ENCODE measurements at regions of chr17 and their contacts with region 1.

Region 1: DNA sequence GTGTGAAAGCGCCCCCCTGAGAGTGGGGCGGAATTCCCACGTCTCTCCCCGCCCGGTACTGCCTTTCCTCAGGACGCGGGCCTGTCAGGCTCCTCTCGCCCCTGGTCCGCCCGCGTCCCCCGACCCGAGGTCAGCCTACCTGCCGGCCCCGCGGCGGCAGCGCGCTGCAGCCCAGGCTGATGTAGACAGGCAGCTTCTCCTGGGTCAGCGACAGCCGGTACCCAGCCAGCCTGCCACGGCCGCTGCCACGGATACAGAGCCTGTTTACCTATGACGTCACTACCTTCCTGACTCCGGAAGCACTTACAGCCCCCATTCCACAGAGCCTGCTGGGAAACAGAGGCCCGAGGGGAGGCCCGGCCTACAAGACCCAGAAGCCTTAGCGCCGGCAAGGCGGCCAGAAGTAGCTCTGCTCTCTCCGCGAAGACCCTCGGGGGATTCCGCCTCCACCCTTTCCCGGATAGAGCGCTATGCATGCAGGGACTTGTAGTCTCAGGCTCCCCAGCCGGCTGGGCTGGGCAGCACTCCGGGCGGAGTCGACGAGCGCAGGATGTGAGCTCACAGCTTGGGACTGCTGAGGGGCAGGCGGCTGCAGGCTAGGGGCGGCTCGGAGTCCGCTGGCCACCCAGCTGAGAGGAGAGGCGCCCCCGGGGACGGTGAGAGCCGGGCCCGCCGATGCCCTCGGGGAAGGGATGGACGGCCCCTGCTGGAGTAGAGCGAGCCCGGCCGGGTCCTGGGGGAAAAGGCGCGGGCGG is at the starts of genes IFT20 and TNFAIP1:
- DNase-seq: peak; percentile 99
- ATAC-seq: peak; percentile 98
- H3K4me3 ChIP-seq: peak within 1 kb of the TSS; percentile 73 to 99 (median 94)
- H3K27ac ChIP-seq: peak within 1 kb of the TSS; percentile 86 to 94 (median 90)
- H3K4me1 ChIP-seq: peaks cover 38 to 41% of the 10 kb centered on the region in 2 donors
- H3K27me3 ChIP-seq: no peaks in the 10 kb centered on the region
- CTCF ChIP-seq: no peak
- POLR2A ChIP-seq: peak; percentile 92 to 93
- total RNA-seq, gene IFT20: 3.7 to 15.9 (median 4.9) TPM
- total RNA-seq, gene TNFAIP1: 18.8 to 36.5 (median 25.5) TPM

Region 2: DNA sequence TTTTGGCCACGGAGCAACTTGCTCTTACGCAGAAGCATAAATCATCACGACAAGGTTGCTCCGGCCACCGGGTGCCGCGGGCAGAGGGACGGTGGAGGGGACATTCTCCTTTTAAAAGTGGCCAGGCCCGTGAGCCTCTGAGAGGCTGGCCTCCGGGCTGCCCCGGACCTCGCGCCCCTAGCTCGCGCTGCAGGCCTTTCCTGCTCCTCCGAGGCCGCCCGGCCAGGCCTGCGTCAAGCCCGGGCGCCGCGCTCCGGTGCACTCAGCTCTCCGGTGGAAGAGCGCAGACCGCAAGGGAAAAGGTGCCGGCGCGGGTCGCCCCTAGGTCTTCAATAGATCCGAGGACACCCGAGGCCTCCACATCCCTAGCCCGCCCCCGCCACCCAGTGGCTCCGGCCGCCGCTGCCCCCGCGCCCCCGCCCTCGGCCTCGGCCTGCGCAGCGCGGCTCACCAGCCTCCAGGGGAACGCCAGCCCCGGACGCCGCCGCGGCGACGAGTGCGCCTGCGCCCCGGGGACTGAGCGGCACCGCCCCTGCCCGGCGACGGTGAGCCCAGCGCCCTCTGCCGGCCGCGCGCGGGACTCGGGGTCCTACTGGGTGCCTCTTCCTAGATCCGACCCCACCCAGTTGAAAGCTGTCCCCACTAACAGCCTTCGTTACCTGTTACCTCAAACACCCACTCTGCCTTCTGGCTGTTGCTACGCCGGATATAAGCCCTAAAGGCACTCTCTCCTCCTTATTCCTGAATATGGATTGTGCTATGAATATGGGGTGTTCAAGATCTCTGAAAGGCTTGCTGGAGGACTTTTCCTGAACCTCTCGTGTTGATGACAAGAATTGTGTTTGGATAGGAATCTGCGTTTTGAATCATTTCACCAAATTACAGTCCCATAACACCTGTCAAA is 442.3 kb before region 1 on chr17 and contains the start of gene LYRM9:
- in situ Hi-C with region 1: no loop called
- intact Hi-C with region 1: loop called (anchors 10 kb)
- DNase-seq: peak; percentile 75 to 88
- ATAC-seq: peak; percentile 96 to 97
- H3K4me3 ChIP-seq: peak within 1 kb of the TSS; percentile 66 to 91 (median 85)
- H3K27ac ChIP-seq: peak within 1 kb of the TSS; percentile 84 to 88 (median 86)
- H3K4me1 ChIP-seq: peaks cover 6 to 7% of the 10 kb centered on the region in 2 donors
- H3K27me3 ChIP-seq: no peaks in the 10 kb centered on the region
- CTCF ChIP-seq: peak; percentile 81 to 98 (median 90)
- POLR2A ChIP-seq: peak; percentile 21 to 30
- total RNA-seq, gene LYRM9: 5.9 to 37.2 (median 9.6) TPM

Region 3: GRCh38 chr17:28041068-28041843 is 294.1 kb before region 1 on chr17:
- in situ Hi-C with region 1: loop called in 1 of 4 experiments (anchors 10 kb)
- intact Hi-C with region 1: loop called (anchors 2 kb)
- DNase-seq: peak; percentile 100
- ATAC-seq: peak; percentile 94 to 97
- H3K4me3 ChIP-seq: peak overlapping the region; percentile 80 to 97 (median 86)
- H3K27ac ChIP-seq: peak overlapping the region; percentile 89 to 95 (median 92)
- H3K4me1 ChIP-seq: peaks cover 36 to 38% of the 10 kb centered on the region in 2 donors
- H3K27me3 ChIP-seq: no peaks in the 10 kb centered on the region
- CTCF ChIP-seq: no peak
- POLR2A ChIP-seq: peak; percentile 59 to 72

Region 4: DNA sequence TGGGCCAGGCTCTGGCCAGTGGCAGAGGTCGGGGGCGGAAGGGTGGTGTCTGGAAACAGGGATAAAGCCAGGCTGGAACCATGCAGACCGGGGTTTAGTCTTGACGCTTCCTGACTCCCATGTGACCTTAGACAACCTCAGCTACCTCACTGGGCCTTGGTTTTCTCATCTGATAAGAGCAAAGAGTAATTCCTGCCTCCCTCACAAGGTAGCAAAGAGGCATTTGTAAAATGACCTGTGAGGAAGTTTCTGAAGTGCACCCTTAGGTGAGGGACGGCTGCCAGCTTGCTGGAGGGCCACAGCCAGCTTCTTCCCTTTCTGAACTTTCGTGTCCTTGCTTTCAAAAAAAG is 94.4 kb before region 1 on chr17:
- in situ Hi-C with region 1: no loop called
- intact Hi-C with region 1: no loop called
- DNase-seq: no peak
- ATAC-seq: no peak
- H3K4me3 ChIP-seq: no peak overlapping the region
- H3K27ac ChIP-seq: no peak overlapping the region
- H3K4me1 ChIP-seq: no peaks in the 10 kb centered on the region
- H3K27me3 ChIP-seq: no peaks in the 10 kb centered on the region
- CTCF ChIP-seq: no peak
- POLR2A ChIP-seq: no peak

Region 5: GRCh38 chr17:28318759-28319660 is 16.4 kb before region 1 on chr17 and contains the start of gene TMEM97:
- in situ Hi-C with region 1: no loop called
- intact Hi-C with region 1: loop called (anchors 1 kb)
- DNase-seq: peak; percentile 97
- ATAC-seq: peak; percentile 97 to 99
- H3K4me3 ChIP-seq: peak within 1 kb of the TSS; percentile 64 to 88 (median 71)
- H3K27ac ChIP-seq: peak within 1 kb of the TSS; percentile 79 to 91 (median 85)
- H3K4me1 ChIP-seq: peaks cover 16 to 19% of the 10 kb centered on the region in 2 donors
- H3K27me3 ChIP-seq: no peaks in the 10 kb centered on the region
- CTCF ChIP-seq: peak in 4 of 5 experiments; percentile 8 to 24 (median 16)
- POLR2A ChIP-seq: peak; percentile 58 to 59
- total RNA-seq, gene TMEM97: 5.1 to 7.2 (median 6.6) TPM

Region 6: GRCh38 chr17:28357061-28357900 is 21.9 kb after region 1 on chr17 and contains the start of gene POLDIP2:
- in situ Hi-C with region 1: no loop called
- intact Hi-C with region 1: loop called (anchors 1 kb)
- DNase-seq: peak; percentile 92 to 94
- ATAC-seq: peak; percentile 98
- H3K4me3 ChIP-seq: peak within 1 kb of the TSS; percentile 88 to 98 (median 94)
- H3K27ac ChIP-seq: peak within 1 kb of the TSS; percentile 94 to 97 (median 96)
- H3K4me1 ChIP-seq: peaks cover 24 to 26% of the 10 kb centered on the region in 2 donors
- H3K27me3 ChIP-seq: no peaks in the 10 kb centered on the region
- CTCF ChIP-seq: no peak
- POLR2A ChIP-seq: peak; percentile 93 to 97
- total RNA-seq, gene POLDIP2: 217 to 281 (median 237) TPM

Region 7: GRCh38 chr17:28371245-28372202 is 36.1 kb after region 1 on chr17 and contains the start of gene SARM1:
- in situ Hi-C with region 1: no loop called
- intact Hi-C with region 1: no loop called
- DNase-seq: peak; percentile 46 to 54
- ATAC-seq: peak; percentile 64 to 67
- H3K4me3 ChIP-seq: peak within 1 kb of the TSS; percentile 58 to 77 (median 64)
- H3K27ac ChIP-seq: peak within 1 kb of the TSS; percentile 32 to 50 (median 37)
- H3K4me1 ChIP-seq: peaks cover 10 to 11% of the 10 kb centered on the region in 2 donors
- H3K27me3 ChIP-seq: no peaks in the 10 kb centered on the region
- CTCF ChIP-seq: no peak
- POLR2A ChIP-seq: no peak
- total RNA-seq, gene SARM1: 0.78 to 1.9 (median 1.7) TPM

Region 8: GRCh38 chr17:28951991-28952975 is 616.9 kb after region 1 on chr17:
- in situ Hi-C with region 1: loop called in 3 of 4 experiments (anchors 10 to 25 kb)
- intact Hi-C with region 1: loop called (anchors 1 kb)
- DNase-seq: peak; percentile 98 to 99
- ATAC-seq: peak; percentile 80 to 85
- H3K4me3 ChIP-seq: peak overlapping the region; percentile 49 to 88 (median 68)
- H3K27ac ChIP-seq: peak overlapping the region; percentile 93 to 96 (median 95)
- H3K4me1 ChIP-seq: peaks cover 22 to 25% of the 10 kb centered on the region in 2 donors
- H3K27me3 ChIP-seq: no peaks in the 10 kb centered on the region
- CTCF ChIP-seq: no peak
- POLR2A ChIP-seq: peak; percentile 55 to 84

Measured in gastrocnemius medialis (tissue), 4 donors.